IMR-90 (cell line): ENCODE measurements at regions of chr3 and their contacts with region 1.

Region 1: GRCh38 chr3:46566036-46566641 is at the start of gene LRRC2:
- DNase-seq: peak; percentile 76
- ATAC-seq: peak; percentile 83
- H3K4me3 ChIP-seq: peak within 1 kb of the TSS; percentile 57
- H3K27ac ChIP-seq: peak within 1 kb of the TSS; percentile 53
- H3K4me1 ChIP-seq: peaks cover 11% of the 10 kb centered on the region
- H3K27me3 ChIP-seq: no peaks in the 10 kb centered on the region
- CTCF ChIP-seq: no peak
- POLR2A ChIP-seq: peak; percentile 34; the same call in 1 of the 2 replicates
- RAD21 ChIP-seq: no peak
- total RNA-seq, gene LRRC2: 4.1 and 4.7 TPM in 2 replicates

Region 2: GRCh38 chr3:46423588-46423987 is 142.6 kb before region 1 on chr3:
- CTCF ChIA-PET with region 1: interaction called, 10 read pairs
- POLR2A ChIA-PET with region 1: no interaction called
- dilution Hi-C with region 1: no loop called
- in situ Hi-C with region 1: no loop called
- intact Hi-C with region 1: no loop called
- DNase-seq: peak; percentile 34
- ATAC-seq: no peak
- H3K4me3 ChIP-seq: no peak overlapping the region
- H3K27ac ChIP-seq: no peak overlapping the region
- H3K4me1 ChIP-seq: no peaks in the 10 kb centered on the region
- H3K27me3 ChIP-seq: peaks cover 13% of the 10 kb centered on the region
- CTCF ChIP-seq: no peak
- POLR2A ChIP-seq: no peak
- RAD21 ChIP-seq: no peak

Region 3: DNA sequence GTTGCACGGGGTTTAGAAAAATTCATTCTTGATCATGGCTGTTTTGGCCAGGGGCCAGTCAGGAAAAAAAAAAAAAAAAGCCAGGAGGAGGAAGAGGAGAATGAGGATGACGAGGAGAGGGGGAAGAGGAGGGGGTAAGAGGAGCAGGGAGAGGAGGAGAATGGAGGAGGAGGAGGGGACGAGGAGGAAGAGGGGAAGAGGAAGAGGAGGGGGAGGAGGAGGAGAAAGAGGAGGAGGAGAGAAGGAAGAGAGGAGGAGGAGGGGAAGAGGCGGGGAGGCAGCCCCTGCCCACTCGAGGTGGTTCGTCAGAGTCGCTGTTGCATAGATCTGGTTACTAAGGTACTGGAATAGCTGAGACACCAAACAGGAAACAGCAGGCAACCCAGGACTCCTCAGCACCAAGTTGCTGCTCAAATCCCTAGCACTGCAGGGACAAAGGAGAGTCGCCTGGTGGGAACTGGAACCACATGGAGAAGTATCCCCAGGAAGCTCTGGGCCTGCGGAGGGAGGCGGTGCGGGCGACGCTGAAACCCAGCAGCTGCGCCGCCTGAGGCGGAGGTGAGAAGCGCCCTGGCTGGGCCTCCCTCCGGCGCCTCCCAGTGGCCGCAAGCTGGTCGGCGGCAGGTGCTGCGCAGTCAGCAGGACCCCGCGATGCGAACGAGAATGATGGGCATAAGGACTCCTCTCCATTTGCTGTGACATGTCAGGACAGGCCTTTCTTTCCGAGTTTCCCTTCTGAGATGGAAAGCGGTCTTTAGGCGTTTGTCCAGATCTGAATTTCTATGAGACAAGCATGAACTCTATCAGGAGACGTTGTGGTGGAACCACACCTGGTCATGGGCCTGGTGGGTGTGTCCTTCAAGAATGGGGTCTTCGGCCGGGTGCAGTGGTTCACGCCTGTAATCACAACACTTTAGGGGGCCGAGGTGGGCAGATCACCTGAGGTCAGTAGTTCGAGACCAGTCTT is 63.7 kb after region 1 on chr3:
- CTCF ChIA-PET with region 1: interaction called, 3 read pairs
- POLR2A ChIA-PET with region 1: no interaction called
- dilution Hi-C with region 1: no loop called
- in situ Hi-C with region 1: no loop called
- intact Hi-C with region 1: loop called (anchors 5 kb)
- DNase-seq: peak; percentile 76
- ATAC-seq: peak; percentile 82
- H3K4me3 ChIP-seq: no peak overlapping the region
- H3K27ac ChIP-seq: peak overlapping the region; percentile 24
- H3K4me1 ChIP-seq: peaks cover 24% of the 10 kb centered on the region
- H3K27me3 ChIP-seq: no peaks in the 10 kb centered on the region; the same call in 1 of the 2 replicates
- CTCF ChIP-seq: peak; percentile 99
- POLR2A ChIP-seq: no peak
- RAD21 ChIP-seq: peak; percentile 82